Endothelial cell of umbilical vein (primary cell): ENCODE measurements at regions of chr17 and their contacts with region 1.

Region 1: GRCh38 chr17:39235555-39236449 is 10.1 kb upstream of the STAC2 start:
- DNase-seq: peak; percentile 53
- H3K4me3 ChIP-seq: no peak overlapping the region
- H3K27ac ChIP-seq: no peak overlapping the region
- H3K4me1 ChIP-seq: peaks cover 3% of the 10 kb centered on the region
- H3K27me3 ChIP-seq: peaks cover 4 to 5% of the 10 kb centered on the region in 2 experiments
- CTCF ChIP-seq: peak; percentile 83 to 85
- POLR2A ChIP-seq: no peak

Region 2: DNA sequence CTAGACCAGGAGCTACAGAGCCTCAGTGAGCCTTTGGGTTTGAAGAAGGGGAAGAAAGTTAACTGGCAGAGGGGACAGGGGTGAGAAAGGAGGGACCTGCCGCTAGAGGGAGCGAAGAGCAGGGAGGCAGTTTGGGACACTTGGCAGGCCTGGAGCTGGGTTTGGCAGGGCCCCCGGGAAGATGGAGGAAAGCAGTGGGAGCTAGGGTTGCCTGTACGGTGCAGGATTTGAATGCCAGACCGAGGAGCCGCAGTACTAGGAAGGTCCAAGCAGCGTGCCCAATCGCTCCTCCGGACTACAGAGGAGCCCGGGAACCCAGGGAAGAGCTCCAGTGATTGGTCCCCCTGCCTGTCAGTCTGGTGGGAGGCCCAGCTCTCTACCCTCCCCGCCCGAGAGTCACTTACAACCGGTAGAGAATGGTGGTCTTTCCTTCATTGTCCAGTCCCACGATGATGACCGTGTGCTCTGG is 71.1 kb before region 1 on chr17:
- CTCF ChIA-PET with region 1: interaction called, 39 read pairs
- POLR2A ChIA-PET with region 1: no interaction called
- dilution Hi-C with region 1: no loop called
- intact Hi-C with region 1: loop called (anchors 2 kb)
- DNase-seq: peak; percentile 86
- H3K4me3 ChIP-seq: peak overlapping the region; percentile 2 to 54 (median 36)
- H3K27ac ChIP-seq: no peak overlapping the region
- H3K4me1 ChIP-seq: peaks cover 5% of the 10 kb centered on the region
- H3K27me3 ChIP-seq: peaks cover 27 to 31% of the 10 kb centered on the region in 2 experiments
- CTCF ChIP-seq: peak; percentile 70 to 89
- POLR2A ChIP-seq: no peak

Region 3: GRCh38 chr17:39209317-39210092 is 26.3 kb before region 1 on chr17:
- CTCF ChIA-PET with region 1: interaction called, 420 read pairs
- POLR2A ChIA-PET with region 1: no interaction called
- dilution Hi-C with region 1: no loop called
- intact Hi-C with region 1: no loop called
- DNase-seq: peak; percentile 29
- H3K4me3 ChIP-seq: peak overlapping the region in 2 of 3 experiments; percentile 7 to 27
- H3K27ac ChIP-seq: no peak overlapping the region
- H3K4me1 ChIP-seq: peaks cover 5% of the 10 kb centered on the region
- H3K27me3 ChIP-seq: peaks cover 0 to 2% of the 10 kb centered on the region in 2 experiments
- CTCF ChIP-seq: no peak
- POLR2A ChIP-seq: no peak

Region 4: GRCh38 chr17:39219647-39220154 is 16.1 kb before region 1 on chr17:
- CTCF ChIA-PET with region 1: interaction called, 15 read pairs
- POLR2A ChIA-PET with region 1: no interaction called
- dilution Hi-C with region 1: no loop called
- intact Hi-C with region 1: no loop called
- DNase-seq: no peak
- H3K4me3 ChIP-seq: no peak overlapping the region
- H3K27ac ChIP-seq: no peak overlapping the region
- H3K4me1 ChIP-seq: peaks cover under 1% of the 10 kb centered on the region
- H3K27me3 ChIP-seq: peaks cover 28 to 30% of the 10 kb centered on the region in 2 experiments
- CTCF ChIP-seq: no peak
- POLR2A ChIP-seq: no peak

Region 5: GRCh38 chr17:39607851-39608130 is 372.0 kb after region 1 on chr17 and contains the start of gene NEUROD2:
- CTCF ChIA-PET with region 1: no interaction called
- POLR2A ChIA-PET with region 1: no interaction called
- dilution Hi-C with region 1: no loop called
- intact Hi-C with region 1: no loop called
- DNase-seq: no peak
- H3K4me3 ChIP-seq: no peak within 1 kb of the TSS
- H3K27ac ChIP-seq: no peak within 1 kb of the TSS
- H3K4me1 ChIP-seq: no peaks in the 10 kb centered on the region
- H3K27me3 ChIP-seq: peaks cover 55 to 67% of the 10 kb centered on the region in 2 experiments
- CTCF ChIP-seq: no peak
- POLR2A ChIP-seq: no peak
- total RNA-seq, gene NEUROD2: not detected in 2 replicates